ENCODE measurements at regions of chr3 and their contacts with region 1.

Region 1: GRCh38 chr3:122942937-122943827 is 84.4 kb downstream of the SEMA5B start:
- DNase-seq: no peak
- H3K4me3 Mint-ChIP-seq: no peak overlapping the region
- H3K27ac Mint-ChIP-seq: no peak overlapping the region
- H3K4me1 Mint-ChIP-seq: no peaks in the 10 kb centered on the region
- H3K27me3 Mint-ChIP-seq: peaks cover 14% of the 10 kb centered on the region

Region 2: GRCh38 chr3:123258811-123259420 is 315.7 kb after region 1 on chr3:
- intact Hi-C with region 1: loop called (anchors 2 kb)
- DNase-seq: no peak
- H3K4me3 Mint-ChIP-seq: no peak overlapping the region
- H3K27ac Mint-ChIP-seq: no peak overlapping the region
- H3K4me1 Mint-ChIP-seq: peaks cover 10% of the 10 kb centered on the region
- H3K27me3 Mint-ChIP-seq: no peaks in the 10 kb centered on the region

Measured in activated T-helper 1 cell treated with anti-CD3 and anti-CD28 coated beads, Interleukin-12 subunit alpha, Interleukin-12 subunit beta, Interleukin-2, Interleukin-4 antibody, amounts not matched to agents 30 ng/mL and 10 ng/mL and 1 ng/mL, durations not matched to agents 14 hours and 24 hours and 36 hours (primary cell).